ENCODE measurements at regions of chr16 and their contacts with region 1.

Region 1: GRCh38 chr16:84836234-84836647 is 16.5 kb downstream of the CRISPLD2 start:
- DNase-seq: peak; percentile 100
- ATAC-seq: peak; percentile 75
- H3K4me3 ChIP-seq: no peak overlapping the region
- H3K27ac ChIP-seq: peak overlapping the region; percentile 80
- H3K4me1 ChIP-seq: peaks cover 52% of the 10 kb centered on the region
- H3K27me3 ChIP-seq: no peaks in the 10 kb centered on the region
- CTCF ChIP-seq: 0 out of 2 replicates have a peak, but pooled peaks have one; percentile 7
- POLR2A ChIP-seq: no peak
- RAD21 ChIP-seq: peak; percentile 48

Region 2: GRCh38 chr16:84643180-84643583 is 193.1 kb before region 1 on chr16:
- CTCF ChIA-PET with region 1: no interaction called
- POLR2A ChIA-PET with region 1: no interaction called
- dilution Hi-C with region 1: no loop called
- in situ Hi-C with region 1: no loop called
- intact Hi-C with region 1: no loop called
- DNase-seq: peak; percentile 93
- ATAC-seq: peak; percentile 87
- H3K4me3 ChIP-seq: no peak overlapping the region
- H3K27ac ChIP-seq: peak overlapping the region; percentile 87
- H3K4me1 ChIP-seq: peaks cover 32% of the 10 kb centered on the region
- H3K27me3 ChIP-seq: no peaks in the 10 kb centered on the region
- CTCF ChIP-seq: no peak
- POLR2A ChIP-seq: no peak
- RAD21 ChIP-seq: no peak

Region 3: DNA sequence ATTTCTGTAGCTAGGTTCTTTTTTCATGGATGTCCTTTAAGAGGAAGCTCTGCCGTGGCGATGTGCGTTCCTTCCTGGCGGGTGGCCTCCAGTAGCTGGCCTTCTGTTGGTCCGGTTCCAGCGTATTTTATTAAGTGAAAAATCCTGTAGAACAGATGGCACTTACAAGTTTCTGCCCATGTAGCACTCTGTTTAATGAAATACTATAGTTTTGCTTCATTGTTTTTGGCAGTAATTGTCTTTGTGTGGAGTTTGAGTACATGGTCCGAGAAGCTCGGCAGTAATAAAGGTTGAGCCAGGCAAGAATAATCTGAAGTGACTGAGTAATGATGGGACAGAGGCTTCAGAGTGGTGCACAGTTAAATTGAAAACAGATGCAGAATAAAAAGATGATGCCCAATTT is 116.1 kb before region 1 on chr16:
- CTCF ChIA-PET with region 1: no interaction called
- POLR2A ChIA-PET with region 1: no interaction called
- dilution Hi-C with region 1: no loop called
- in situ Hi-C with region 1: no loop called
- intact Hi-C with region 1: no loop called
- DNase-seq: no peak
- ATAC-seq: no peak
- H3K4me3 ChIP-seq: no peak overlapping the region
- H3K27ac ChIP-seq: peak overlapping the region; percentile 32; the same call in 1 of the 2 replicates
- H3K4me1 ChIP-seq: peaks cover 12% of the 10 kb centered on the region
- H3K27me3 ChIP-seq: no peaks in the 10 kb centered on the region
- CTCF ChIP-seq: no peak
- POLR2A ChIP-seq: no peak
- RAD21 ChIP-seq: no peak

Region 4: DNA sequence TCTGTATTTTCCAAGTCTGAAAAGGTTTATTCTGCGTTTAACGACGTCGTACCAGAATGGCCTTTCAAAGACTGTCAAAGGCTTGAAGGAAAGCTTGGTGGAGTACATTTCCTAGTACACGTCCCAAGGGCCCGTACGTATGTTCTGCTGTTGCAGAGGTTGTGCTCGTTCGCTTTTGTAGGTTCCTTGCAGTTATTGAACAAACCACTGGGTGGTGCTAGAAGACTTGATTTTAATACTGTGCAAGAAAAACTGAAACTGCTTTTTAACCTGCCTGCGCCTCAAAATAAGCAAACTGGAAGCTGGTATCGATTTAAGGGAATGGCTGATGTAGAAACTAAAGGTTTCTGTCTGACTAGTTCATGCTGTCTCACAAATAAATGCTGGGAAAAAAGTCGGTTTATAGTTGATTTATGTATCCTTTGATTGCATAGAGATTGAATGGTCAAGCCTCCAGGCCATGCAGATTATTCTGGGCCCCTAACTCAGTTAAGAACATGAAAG is 81.8 kb before region 1 on chr16:
- CTCF ChIA-PET with region 1: interaction called, 3 read pairs
- POLR2A ChIA-PET with region 1: no interaction called
- dilution Hi-C with region 1: no loop called
- in situ Hi-C with region 1: loop called (anchors 5 kb)
- intact Hi-C with region 1: no loop called
- DNase-seq: peak; percentile 93
- ATAC-seq: peak; percentile 87
- H3K4me3 ChIP-seq: no peak overlapping the region
- H3K27ac ChIP-seq: peak overlapping the region; percentile 23; the same call in 1 of the 2 replicates
- H3K4me1 ChIP-seq: peaks cover 27% of the 10 kb centered on the region
- H3K27me3 ChIP-seq: no peaks in the 10 kb centered on the region
- CTCF ChIP-seq: peak; percentile 83
- POLR2A ChIP-seq: 0 out of 2 replicates have a peak, but pooled peaks have one; percentile 23
- RAD21 ChIP-seq: peak; percentile 85

Region 5: GRCh38 chr16:84765616-84766580 is 70.3 kb before region 1 on chr16:
- CTCF ChIA-PET with region 1: interaction called, 3 read pairs
- POLR2A ChIA-PET with region 1: no interaction called
- dilution Hi-C with region 1: no loop called
- in situ Hi-C with region 1: no loop called
- intact Hi-C with region 1: loop called (anchors 2 kb)
- DNase-seq: no peak
- ATAC-seq: no peak; the same call in 1 of the 2 replicates
- H3K4me3 ChIP-seq: no peak overlapping the region
- H3K27ac ChIP-seq: peak overlapping the region; percentile 84; the same call in 1 of the 2 replicates
- H3K4me1 ChIP-seq: peaks cover 33% of the 10 kb centered on the region
- H3K27me3 ChIP-seq: no peaks in the 10 kb centered on the region
- CTCF ChIP-seq: no peak
- POLR2A ChIP-seq: no peak
- RAD21 ChIP-seq: no peak

Region 6: DNA sequence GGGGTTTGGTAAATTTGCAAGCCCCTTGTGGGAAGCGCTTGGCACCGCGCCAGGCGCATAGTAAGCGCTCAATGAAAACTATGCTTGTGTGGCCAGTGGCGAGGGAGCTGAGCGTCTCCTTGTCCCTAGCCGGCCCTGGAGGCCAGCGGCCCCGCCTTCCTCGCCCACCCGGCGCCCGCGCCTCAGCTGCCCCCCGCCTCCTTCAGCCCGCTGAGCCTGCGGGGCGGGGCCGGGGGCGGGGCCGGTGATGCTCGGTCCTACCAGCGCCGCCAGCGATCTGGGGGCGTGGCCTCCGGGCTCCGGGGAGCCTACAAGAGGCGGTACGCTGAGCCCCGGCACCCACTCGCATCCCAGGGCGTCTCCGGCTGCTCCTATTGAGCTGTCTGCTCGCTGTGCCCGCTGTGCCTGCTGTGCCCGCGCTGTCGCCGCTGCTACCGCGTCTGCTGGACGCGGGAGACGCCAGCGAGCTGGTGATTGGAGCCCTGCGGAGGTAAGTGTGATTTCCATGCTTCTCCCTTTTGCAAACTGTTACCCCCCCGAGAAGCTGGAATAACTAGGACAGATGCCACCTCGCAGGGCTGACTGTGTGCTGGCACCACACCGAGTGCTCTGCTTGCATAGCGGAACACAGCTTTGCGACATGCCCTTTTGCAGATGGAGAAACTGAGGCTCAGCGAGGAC is 16.5 kb before region 1 on chr16 and contains the start of gene CRISPLD2:
- CTCF ChIA-PET with region 1: no interaction called
- POLR2A ChIA-PET with region 1: interaction called, 14 read pairs
- dilution Hi-C with region 1: no loop called
- in situ Hi-C with region 1: no loop called
- intact Hi-C with region 1: no loop called
- DNase-seq: peak; percentile 84
- ATAC-seq: peak; percentile 99
- H3K4me3 ChIP-seq: peak within 1 kb of the TSS; percentile 52
- H3K27ac ChIP-seq: no peak within 1 kb of the TSS; the same call in 1 of the 2 replicates
- H3K4me1 ChIP-seq: peaks cover 25% of the 10 kb centered on the region
- H3K27me3 ChIP-seq: no peaks in the 10 kb centered on the region
- CTCF ChIP-seq: no peak
- POLR2A ChIP-seq: peak; percentile 99
- RAD21 ChIP-seq: no peak
- total RNA-seq, gene CRISPLD2: 35.0 and 37.5 TPM in 2 replicates

Region 7: DNA sequence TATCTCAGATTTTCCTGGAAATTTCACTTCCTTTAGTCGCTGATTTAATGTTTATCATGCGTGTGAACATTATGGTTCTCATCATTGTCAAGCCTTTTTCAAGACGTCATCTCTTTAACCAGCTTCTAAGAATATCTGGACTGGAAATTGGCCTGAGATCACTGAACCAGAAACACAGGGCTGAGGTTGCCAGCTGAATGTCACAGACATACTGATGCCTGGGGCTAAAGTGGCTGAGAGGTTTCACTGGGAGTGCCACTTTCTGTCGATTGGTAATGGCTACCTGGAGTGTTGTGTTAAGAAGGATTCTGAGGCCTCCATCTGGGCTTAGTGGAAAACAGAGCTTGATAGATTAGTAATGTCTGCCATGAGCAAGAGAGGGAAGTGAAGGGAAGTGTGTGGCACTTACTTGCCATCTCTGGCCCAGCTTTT is 37.8 kb after region 1 on chr16:
- CTCF ChIA-PET with region 1: interaction called, 3 read pairs
- POLR2A ChIA-PET with region 1: interaction called, 9 read pairs
- dilution Hi-C with region 1: no loop called
- in situ Hi-C with region 1: no loop called
- intact Hi-C with region 1: loop called (anchors 2 kb)
- DNase-seq: no peak
- ATAC-seq: no peak; the same call in 1 of the 2 replicates
- H3K4me3 ChIP-seq: no peak overlapping the region
- H3K27ac ChIP-seq: peak overlapping the region; percentile 99; the same call in 1 of the 2 replicates
- H3K4me1 ChIP-seq: peaks cover 8% of the 10 kb centered on the region
- H3K27me3 ChIP-seq: no peaks in the 10 kb centered on the region
- CTCF ChIP-seq: no peak
- POLR2A ChIP-seq: no peak
- RAD21 ChIP-seq: no peak

Region 8: DNA sequence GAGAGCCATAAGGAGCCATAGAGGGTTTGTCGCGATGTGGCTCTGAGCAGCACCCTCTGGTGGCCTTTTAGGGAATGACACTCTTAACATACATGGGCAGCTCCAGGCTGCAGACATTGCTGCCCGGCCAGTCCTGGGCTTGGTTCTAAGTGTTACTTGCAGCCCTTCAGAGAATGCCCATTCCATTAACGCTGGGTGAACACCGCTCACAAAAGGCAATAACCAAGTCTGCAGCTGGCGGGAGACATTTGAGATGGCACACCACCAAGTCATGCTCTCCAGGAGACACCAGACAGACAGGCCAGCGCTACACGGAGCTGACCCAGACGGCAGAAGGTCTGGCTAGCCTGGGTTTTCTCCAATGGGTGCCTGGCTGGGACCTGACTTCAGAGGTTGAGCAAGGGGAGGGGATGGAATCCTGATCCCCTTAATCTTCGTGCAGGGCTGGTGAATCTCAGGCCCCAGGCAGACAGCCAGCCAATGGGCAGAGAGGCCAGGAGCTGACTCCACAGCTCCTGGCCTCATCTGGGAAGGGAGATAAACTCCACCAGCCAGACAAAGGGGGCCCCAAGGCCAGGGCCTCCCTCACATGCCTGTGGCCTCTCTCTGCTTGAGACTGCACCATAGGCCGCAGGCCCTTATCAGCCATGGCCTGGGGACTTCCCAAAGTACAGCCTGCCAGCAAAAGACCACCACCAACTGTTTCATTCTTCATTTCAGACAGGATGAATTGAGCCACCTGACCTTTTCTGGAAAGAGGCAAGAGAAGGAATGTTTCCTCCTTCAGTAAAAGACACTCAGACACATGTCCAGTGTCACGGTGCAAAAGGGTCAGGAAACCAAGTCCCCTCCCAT is 116.3 kb after region 1 on chr16:
- CTCF ChIA-PET with region 1: interaction called, 4 read pairs
- POLR2A ChIA-PET with region 1: no interaction called
- dilution Hi-C with region 1: no loop called
- in situ Hi-C with region 1: no loop called
- intact Hi-C with region 1: loop called (anchors 5 kb)
- DNase-seq: peak; percentile 82
- ATAC-seq: peak; percentile 97
- H3K4me3 ChIP-seq: no peak overlapping the region
- H3K27ac ChIP-seq: no peak overlapping the region
- H3K4me1 ChIP-seq: peaks cover 7% of the 10 kb centered on the region; the same call in 1 of the 2 replicates
- H3K27me3 ChIP-seq: no peaks in the 10 kb centered on the region
- CTCF ChIP-seq: peak; percentile 84
- POLR2A ChIP-seq: 0 out of 2 replicates have a peak, but pooled peaks have one; percentile 25
- RAD21 ChIP-seq: peak; percentile 83